OCI-LY7 (cell line): ENCODE measurements at regions of chr12 and their contacts with region 1.

Region 1: GRCh38 chr12:62006076-62006732 is 254.0 kb upstream of the USP15 start:
- DNase-seq: peak; percentile 48
- H3K4me3 ChIP-seq: no peak overlapping the region
- H3K27ac ChIP-seq: no peak overlapping the region
- H3K4me1 ChIP-seq: no peaks in the 10 kb centered on the region
- CTCF ChIP-seq: peak; percentile 94

Region 2: GRCh38 chr12:62192180-62192902 is 186.1 kb after region 1 on chr12:
- CTCF ChIA-PET with region 1: no interaction called
- POLR2A ChIA-PET with region 1: no interaction called
- intact Hi-C with region 1: loop called (anchors 1 kb)
- DNase-seq: peak; percentile 61
- H3K4me3 ChIP-seq: no peak overlapping the region
- H3K27ac ChIP-seq: no peak overlapping the region
- H3K4me1 ChIP-seq: peaks cover 11% of the 10 kb centered on the region
- CTCF ChIP-seq: peak; percentile 83